CD8-positive, alpha-beta T cell (primary cell): ENCODE measurements at regions of chr12 and their contacts with region 1.

Region 1: GRCh38 chr12:48936379-48936979 is 11.2 kb upstream of the FKBP11 start:
- DNase-seq: peak; percentile 72 to 94 (median 86)
- ATAC-seq: peak; percentile 67
- H3K4me3 ChIP-seq: no peak overlapping the region
- H3K4me3 Mint-ChIP-seq: no peak overlapping the region
- H3K27ac ChIP-seq: peak overlapping the region in 1 of 2 experiments; percentile 17
- H3K27ac Mint-ChIP-seq: peak overlapping the region; percentile 79
- H3K4me1 ChIP-seq: peaks cover 20% of the 10 kb centered on the region
- H3K4me1 Mint-ChIP-seq: peaks cover 30% of the 10 kb centered on the region
- H3K27me3 ChIP-seq: no peaks in the 10 kb centered on the region
- H3K27me3 Mint-ChIP-seq: no peaks in the 10 kb centered on the region
- CTCF ChIP-seq: peak; percentile 88

Region 2: DNA sequence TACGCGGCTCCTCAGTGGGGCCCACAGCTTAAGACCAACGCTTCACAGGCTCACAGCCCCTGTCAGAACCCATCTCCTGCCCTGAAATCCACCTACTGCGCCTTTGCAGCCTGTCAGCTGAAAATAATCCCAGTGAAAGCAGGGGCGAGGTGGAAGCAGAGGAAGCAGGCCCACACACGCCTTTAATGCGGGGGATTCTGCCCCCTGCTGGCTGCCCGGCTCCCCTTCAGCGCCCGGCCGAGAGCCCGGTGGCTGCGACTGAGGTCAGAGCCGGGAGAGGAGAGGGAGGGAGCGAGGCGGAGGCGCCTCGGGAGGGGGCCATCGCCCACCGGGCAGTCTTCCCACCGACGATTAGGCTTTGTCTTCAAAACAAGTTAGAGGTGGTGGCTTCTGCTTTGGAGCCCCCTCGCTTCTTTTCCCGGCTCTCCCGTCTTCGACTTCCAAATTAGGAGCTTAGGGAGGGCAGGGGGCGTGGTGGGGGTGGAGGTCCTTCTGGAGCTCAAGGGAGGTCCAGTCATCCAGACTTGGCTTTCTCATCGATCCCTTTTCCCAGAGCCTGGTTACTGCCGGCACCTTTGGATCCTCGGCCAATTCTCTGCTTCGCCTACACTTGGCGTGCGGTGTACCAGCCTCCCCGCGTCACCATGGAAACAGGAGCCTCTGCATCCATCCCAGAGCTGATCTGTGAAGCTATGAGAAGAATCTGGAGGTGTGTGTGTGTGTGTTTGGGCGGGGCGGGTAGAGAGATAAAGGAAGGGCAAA is 45.6 kb before region 1 on chr12:
- CTCF ChIA-PET with region 1: interaction called, 44 read pairs
- POLR2A ChIA-PET with region 1: no interaction called
- intact Hi-C with region 1: loop called in 1 of 2 experiments (anchors 1 kb)
- DNase-seq: peak; percentile 55 to 85 (median 73)
- ATAC-seq: peak; percentile 99
- H3K4me3 ChIP-seq: peak overlapping the region in 1 of 2 experiments; percentile 35
- H3K4me3 Mint-ChIP-seq: no peak overlapping the region
- H3K27ac ChIP-seq: no peak overlapping the region
- H3K27ac Mint-ChIP-seq: no peak overlapping the region
- H3K4me1 ChIP-seq: peaks cover 7% of the 10 kb centered on the region
- H3K4me1 Mint-ChIP-seq: peaks cover 3% of the 10 kb centered on the region
- H3K27me3 ChIP-seq: peaks cover 5 to 13% of the 10 kb centered on the region in 2 experiments
- H3K27me3 Mint-ChIP-seq: peaks cover 19% of the 10 kb centered on the region
- CTCF ChIP-seq: peak; percentile 83

Region 3: DNA sequence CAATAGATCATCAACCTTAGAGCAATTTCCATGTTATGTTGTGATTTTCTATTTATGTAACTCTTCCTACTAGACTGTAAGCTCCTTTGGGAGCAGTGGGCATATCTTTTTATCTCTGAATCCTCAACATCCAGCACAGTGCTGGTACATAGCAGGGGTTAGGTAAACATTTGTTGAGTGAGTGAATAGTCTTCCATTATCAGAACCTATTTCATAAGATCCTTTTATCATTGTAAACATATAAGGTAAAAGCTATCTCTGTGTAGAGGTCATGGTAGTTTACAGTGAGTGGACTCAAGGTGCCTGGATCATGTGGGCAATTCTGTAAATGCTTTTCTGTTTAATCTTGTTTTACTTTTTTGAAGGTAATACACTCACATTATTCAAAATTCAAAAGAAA is 26.3 kb before region 1 on chr12:
- CTCF ChIA-PET with region 1: interaction called, 84 read pairs
- POLR2A ChIA-PET with region 1: no interaction called
- intact Hi-C with region 1: no loop called
- DNase-seq: no peak
- ATAC-seq: no peak
- H3K4me3 ChIP-seq: no peak overlapping the region
- H3K4me3 Mint-ChIP-seq: no peak overlapping the region
- H3K27ac ChIP-seq: no peak overlapping the region
- H3K27ac Mint-ChIP-seq: no peak overlapping the region
- H3K4me1 ChIP-seq: no peaks in the 10 kb centered on the region
- H3K4me1 Mint-ChIP-seq: no peaks in the 10 kb centered on the region
- H3K27me3 ChIP-seq: no peaks in the 10 kb centered on the region
- H3K27me3 Mint-ChIP-seq: no peaks in the 10 kb centered on the region
- CTCF ChIP-seq: no peak

Region 4: DNA sequence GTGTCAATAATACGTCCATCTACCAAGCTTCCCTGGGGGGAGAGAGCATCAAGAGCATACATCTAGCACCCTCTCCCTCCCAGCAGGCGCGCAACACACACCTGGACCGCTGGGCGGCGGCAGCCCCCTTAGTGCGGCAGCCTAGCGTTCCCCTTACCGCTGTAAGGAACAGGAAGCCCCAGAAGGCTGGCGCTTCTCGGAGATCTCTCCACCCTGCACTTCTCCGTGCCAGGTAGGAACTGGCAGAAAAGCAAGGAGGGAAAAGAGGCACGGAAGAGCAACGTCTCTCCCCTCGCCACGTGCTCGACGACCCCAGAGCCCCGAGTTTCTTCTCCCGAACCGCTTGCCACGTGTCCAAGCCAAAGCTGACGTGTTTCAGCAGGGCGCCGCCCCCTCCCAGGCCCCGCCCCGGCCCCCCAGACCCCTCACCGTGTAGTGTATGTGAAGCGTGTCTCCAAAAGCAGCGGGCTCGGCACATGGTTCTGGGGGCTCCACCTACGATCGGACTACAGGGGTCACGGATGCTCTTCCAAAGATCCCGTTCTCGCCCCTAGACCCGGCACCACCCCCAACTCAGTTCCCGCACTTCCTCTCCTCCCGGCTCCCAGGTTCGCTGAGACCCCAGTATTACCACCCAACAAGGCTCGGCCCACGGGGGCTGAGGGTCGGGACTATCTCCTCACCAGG is 11.7 kb before region 1 on chr12:
- CTCF ChIA-PET with region 1: interaction called, 172 read pairs
- POLR2A ChIA-PET with region 1: interaction called, 32 read pairs
- intact Hi-C with region 1: loop called (anchors 1 kb)
- DNase-seq: peak; percentile 65 to 90 (median 83)
- ATAC-seq: peak; percentile 69
- H3K4me3 ChIP-seq: peak overlapping the region; percentile 96 to 99
- H3K4me3 Mint-ChIP-seq: peak overlapping the region; percentile 97
- H3K27ac ChIP-seq: peak overlapping the region; percentile 94
- H3K27ac Mint-ChIP-seq: peak overlapping the region; percentile 97
- H3K4me1 ChIP-seq: peaks cover 24% of the 10 kb centered on the region
- H3K4me1 Mint-ChIP-seq: peaks cover 46% of the 10 kb centered on the region
- H3K27me3 ChIP-seq: no peaks in the 10 kb centered on the region
- H3K27me3 Mint-ChIP-seq: no peaks in the 10 kb centered on the region
- CTCF ChIP-seq: peak; percentile 78

Region 5: DNA sequence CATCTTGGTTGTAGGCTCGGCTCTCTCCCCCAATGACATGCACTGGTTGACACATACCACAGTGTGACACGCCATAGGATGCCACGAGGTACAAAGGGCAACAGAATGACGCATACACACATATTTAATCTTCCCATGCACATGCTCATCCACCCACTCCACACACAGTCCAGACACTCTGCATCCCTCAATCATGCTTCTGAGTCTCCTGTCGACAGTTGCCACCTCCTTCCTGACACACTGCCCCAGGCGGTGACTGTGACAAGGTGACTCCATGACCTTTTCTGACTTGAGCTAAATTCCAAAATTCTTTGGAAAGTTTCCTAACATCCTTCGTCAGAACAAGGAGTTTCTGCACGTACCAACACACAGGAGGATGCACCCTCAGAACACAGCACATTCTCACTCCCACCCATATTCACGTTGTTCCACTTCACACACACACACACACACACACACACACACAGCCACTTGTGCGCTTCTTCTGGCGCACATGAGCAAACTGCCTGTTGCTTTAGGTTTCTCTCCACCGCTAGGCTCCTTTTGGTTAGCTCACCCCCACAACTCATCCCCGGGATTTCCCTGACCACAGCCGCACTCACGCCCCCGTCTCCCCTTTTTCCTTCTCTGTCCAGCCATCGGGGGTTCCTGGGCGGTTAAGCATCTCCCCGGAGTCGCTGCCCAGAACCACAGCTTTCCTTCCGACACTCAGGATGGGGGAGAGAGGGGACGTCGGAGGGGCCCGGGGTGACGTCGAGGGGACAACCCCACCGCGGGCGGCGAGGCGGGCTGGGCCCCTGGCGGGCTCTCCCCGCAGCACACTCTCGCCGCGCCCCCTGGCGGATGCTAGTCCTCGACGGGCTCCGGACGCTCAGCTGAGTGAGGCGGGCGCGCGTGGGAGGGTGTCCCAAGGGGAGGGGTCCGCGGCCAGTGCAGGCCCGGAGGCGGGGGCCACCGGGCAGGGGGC is 41.1 kb after region 1 on chr12:
- CTCF ChIA-PET with region 1: interaction called, 18 read pairs
- POLR2A ChIA-PET with region 1: no interaction called
- intact Hi-C with region 1: loop called in 1 of 2 experiments (anchors 5 kb)
- DNase-seq: peak; percentile 59 to 92 (median 84)
- ATAC-seq: peak; percentile 55
- H3K4me3 ChIP-seq: peak overlapping the region; percentile 60 to 77
- H3K4me3 Mint-ChIP-seq: peak overlapping the region; percentile 63
- H3K27ac ChIP-seq: no peak overlapping the region
- H3K27ac Mint-ChIP-seq: peak overlapping the region; percentile 76
- H3K4me1 ChIP-seq: peaks cover 44% of the 10 kb centered on the region
- H3K4me1 Mint-ChIP-seq: peaks cover 46% of the 10 kb centered on the region
- H3K27me3 ChIP-seq: peaks cover 14% of the 10 kb centered on the region in 2 experiments
- H3K27me3 Mint-ChIP-seq: peaks cover 28% of the 10 kb centered on the region
- CTCF ChIP-seq: peak; percentile 92

Region 6: DNA sequence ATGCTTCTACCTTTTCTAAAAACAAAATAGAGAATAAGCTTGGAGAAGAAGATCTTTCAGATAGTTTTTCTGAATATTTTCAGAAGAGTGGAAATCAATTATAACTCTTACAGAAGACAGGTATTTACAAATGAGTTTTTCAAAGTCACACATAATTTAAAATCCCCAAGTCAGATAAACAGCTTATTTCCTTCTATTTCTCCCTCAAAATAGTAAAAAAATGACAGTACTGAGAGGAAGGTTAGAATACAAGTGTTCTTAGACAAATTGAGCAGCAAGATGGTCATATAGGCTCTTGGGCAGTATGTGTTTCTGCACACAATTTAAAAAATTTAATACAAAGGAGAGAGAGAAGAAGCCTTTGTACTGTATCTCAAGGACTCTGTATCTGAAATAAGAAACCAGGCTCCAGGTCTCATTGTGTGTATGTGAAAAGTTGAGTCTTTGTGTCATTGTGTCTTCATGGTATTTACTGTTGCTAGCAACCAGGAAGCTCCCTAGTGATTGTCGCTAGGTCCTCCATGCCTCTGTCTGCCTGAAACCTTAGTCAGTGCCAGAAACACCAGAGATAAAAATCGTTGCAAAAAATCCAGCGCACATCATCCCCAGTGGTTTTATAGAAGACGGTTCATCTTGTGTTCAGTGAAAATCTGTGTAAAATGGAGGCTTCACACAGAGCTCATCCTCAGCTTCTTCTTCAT is 265.3 kb after region 1 on chr12:
- CTCF ChIA-PET with region 1: no interaction called
- POLR2A ChIA-PET with region 1: no interaction called
- intact Hi-C with region 1: no loop called
- DNase-seq: peak in 2 of 9 experiments; percentile 22 to 45
- ATAC-seq: no peak
- H3K4me3 ChIP-seq: no peak overlapping the region
- H3K4me3 Mint-ChIP-seq: no peak overlapping the region
- H3K27ac ChIP-seq: no peak overlapping the region
- H3K27ac Mint-ChIP-seq: peak overlapping the region; percentile 0
- H3K4me1 ChIP-seq: peaks cover 11% of the 10 kb centered on the region
- H3K4me1 Mint-ChIP-seq: peaks cover 13% of the 10 kb centered on the region
- H3K27me3 ChIP-seq: no peaks in the 10 kb centered on the region
- H3K27me3 Mint-ChIP-seq: peaks cover 2% of the 10 kb centered on the region
- CTCF ChIP-seq: no peak